ENCODE measurements at regions of chr15 and their contacts with region 1.

Region 1: GRCh38 chr15:57667171-57667849 is 39.2 kb upstream of the POLR2M start:
- DNase-seq: no peak
- ATAC-seq: peak in 1 of 2 donors; percentile 39
- H3K4me3 ChIP-seq: no peak overlapping the region
- H3K27ac ChIP-seq: no peak overlapping the region
- H3K4me1 ChIP-seq: no peaks in the 10 kb centered on the region
- H3K27me3 ChIP-seq: no peaks in the 10 kb centered on the region
- CTCF ChIP-seq: peak in 3 of 5 experiments; percentile 21 to 37 (median 27)
- POLR2A ChIP-seq: no peak

Region 2: GRCh38 chr15:57866149-57866736 is 198.9 kb after region 1 on chr15:
- in situ Hi-C with region 1: loop called in 1 of 4 experiments (anchors 25 kb)
- intact Hi-C with region 1: loop called (anchors 5 kb)
- DNase-seq: no peak
- ATAC-seq: no peak
- H3K4me3 ChIP-seq: no peak overlapping the region
- H3K27ac ChIP-seq: no peak overlapping the region
- H3K4me1 ChIP-seq: no peaks in the 10 kb centered on the region
- H3K27me3 ChIP-seq: no peaks in the 10 kb centered on the region
- CTCF ChIP-seq: peak in 3 of 5 experiments; percentile 44 to 64 (median 55)
- POLR2A ChIP-seq: no peak